Left lung (tissue), 14 donors: ENCODE measurements at regions of chr12 and their contacts with region 1.

Region 1: DNA sequence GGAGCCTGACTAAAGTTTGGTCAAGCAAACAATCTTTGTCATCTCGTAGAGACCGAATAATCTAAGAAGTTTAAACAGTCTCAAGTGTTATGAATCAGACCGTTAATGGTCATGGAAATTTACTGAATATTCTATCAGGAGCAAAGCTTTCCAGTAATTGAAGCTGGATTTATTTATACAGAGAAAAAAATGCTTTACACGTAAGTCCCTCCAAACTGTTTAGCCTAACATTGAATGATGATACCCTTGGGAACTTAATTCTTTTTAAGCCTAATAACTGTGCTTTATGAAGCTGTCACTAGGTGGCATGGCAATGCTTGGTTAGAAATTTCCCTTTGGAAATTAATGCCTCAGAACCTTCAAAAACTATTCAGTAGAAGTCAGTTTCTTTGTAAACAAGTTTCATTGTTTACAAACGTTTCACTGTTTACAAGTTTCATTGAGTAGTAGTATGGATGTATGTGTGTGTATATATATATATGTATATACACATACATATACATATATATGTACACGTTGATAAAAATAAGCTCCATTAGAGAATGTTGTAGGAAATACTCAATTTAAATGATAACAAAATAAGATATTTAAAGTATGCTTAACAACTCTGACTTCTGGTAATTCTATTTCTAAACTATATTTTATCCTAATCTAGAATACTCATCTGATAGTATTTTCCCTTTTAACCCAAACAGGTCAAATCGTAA is 32.1 kb downstream of the DEPDC4 start:
- DNase-seq: peak in 2 of 4 donors; percentile 22 to 49
- ATAC-seq: peak; percentile 84
- H3K4me3 ChIP-seq: no peak overlapping the region
- H3K27ac ChIP-seq: no peak overlapping the region
- H3K4me1 ChIP-seq: no peaks in the 10 kb centered on the region
- H3K27me3 ChIP-seq: no peaks in the 10 kb centered on the region
- CTCF ChIP-seq: peak; percentile 53 to 69

Region 2: DNA sequence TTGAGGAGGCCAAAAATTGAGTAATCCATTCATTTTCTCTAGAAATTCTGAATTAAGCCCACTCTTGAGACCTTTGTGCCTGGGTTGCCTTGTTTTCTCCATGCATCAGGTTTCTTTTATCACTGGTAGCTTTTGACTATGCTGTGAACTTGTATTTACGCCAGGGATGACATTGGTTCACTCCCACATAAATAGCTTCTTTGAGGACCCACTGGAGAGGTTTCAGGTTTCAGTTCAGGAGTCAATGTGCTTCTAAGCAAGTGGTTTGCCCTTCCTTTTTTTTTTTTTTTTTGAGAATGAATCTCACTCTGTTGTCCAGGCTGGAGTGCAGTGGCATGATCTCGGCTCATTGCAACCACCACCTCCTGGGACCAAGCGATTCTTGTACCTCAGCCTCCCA is 111.9 kb after region 1 on chr12:
- intact Hi-C with region 1: no loop called
- DNase-seq: no peak
- ATAC-seq: peak; percentile 45
- H3K4me3 ChIP-seq: no peak overlapping the region
- H3K27ac ChIP-seq: no peak overlapping the region
- H3K4me1 ChIP-seq: no peaks in the 10 kb centered on the region
- H3K27me3 ChIP-seq: no peaks in the 10 kb centered on the region
- CTCF ChIP-seq: no peak

Region 3: GRCh38 chr12:100554608-100555077 is 319.9 kb after region 1 on chr12:
- intact Hi-C with region 1: loop called in 1 of 2 experiments (anchors 10 kb)
- DNase-seq: peak in 2 of 4 donors; percentile 70 to 85
- ATAC-seq: peak; percentile 85
- H3K4me3 ChIP-seq: no peak overlapping the region
- H3K27ac ChIP-seq: no peak overlapping the region
- H3K4me1 ChIP-seq: no peaks in the 10 kb centered on the region
- H3K27me3 ChIP-seq: no peaks in the 10 kb centered on the region
- CTCF ChIP-seq: peak; percentile 52 to 65